CD8-positive, alpha-beta memory T cell (primary cell): ENCODE measurements at regions of chr3 and their contacts with region 1.

Region 1: DNA sequence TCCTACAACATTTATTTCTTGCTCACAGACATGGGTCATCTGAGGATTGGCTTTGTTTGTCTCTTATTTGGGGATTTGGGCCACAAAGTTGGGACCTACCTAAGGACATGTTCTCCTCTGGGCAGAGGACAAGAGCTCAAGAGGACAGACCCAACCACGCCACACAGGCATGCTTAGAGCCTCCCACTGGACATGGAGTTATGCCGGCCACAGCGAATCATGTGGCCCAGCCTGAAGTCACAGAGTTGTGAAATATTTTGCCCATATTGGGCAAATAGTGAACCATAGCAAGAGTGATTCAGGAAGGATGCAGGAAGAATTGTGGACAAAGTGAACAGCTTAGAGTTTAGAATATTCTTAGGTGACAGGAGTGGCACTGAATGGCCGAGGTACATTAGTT is 9.9 kb downstream of the TRAK1 start:
- DNase-seq: no peak
- H3K4me3 ChIP-seq: no peak overlapping the region
- H3K4me3 Mint-ChIP-seq: no peak overlapping the region
- H3K27ac ChIP-seq: no peak overlapping the region
- H3K27ac Mint-ChIP-seq: peak overlapping the region in 1 of 8 donors; percentile 3
- H3K4me1 ChIP-seq: no peaks in the 10 kb centered on the region
- H3K4me1 Mint-ChIP-seq: peaks cover 0 to 12% (median 0%) of the 10 kb centered on the region in 3 donors
- H3K27me3 ChIP-seq: no peaks in the 10 kb centered on the region
- H3K27me3 Mint-ChIP-seq: no peaks in the 10 kb centered on the region

Region 2: DNA sequence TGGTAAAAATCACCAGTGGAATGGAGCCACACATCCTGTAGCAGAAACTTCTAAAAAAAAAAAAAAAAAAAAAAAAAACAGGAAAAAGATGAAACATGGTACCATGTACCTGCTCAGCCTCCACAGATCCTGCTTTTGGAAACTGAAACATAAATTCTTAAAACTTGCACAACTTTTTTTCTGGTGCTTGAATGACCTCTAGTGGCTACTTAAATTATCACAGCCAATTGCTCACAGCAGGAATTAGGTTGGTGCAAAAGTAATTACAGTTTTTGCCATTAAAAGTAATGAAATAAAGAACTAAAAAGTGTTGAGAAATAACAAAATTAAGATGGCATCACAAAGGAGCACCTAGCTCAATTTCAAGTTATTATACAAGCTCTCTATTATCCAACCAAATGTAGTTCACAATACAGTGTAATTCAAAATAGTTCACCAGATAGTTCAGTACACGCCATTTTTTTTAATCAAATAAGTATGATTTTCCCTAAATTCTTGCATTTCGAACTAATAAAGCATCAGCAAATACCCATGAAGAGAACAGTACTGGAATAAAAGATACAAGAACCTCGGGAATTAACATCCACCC is 219.7 kb before region 1 on chr3:
- CTCF ChIA-PET with region 1: interaction called, 15 read pairs
- POLR2A ChIA-PET with region 1: no interaction called
- DNase-seq: peak in 2 of 5 donors; percentile 28 to 29
- H3K4me3 ChIP-seq: no peak overlapping the region
- H3K4me3 Mint-ChIP-seq: no peak overlapping the region
- H3K27ac ChIP-seq: no peak overlapping the region
- H3K27ac Mint-ChIP-seq: no peak overlapping the region
- H3K4me1 ChIP-seq: no peaks in the 10 kb centered on the region
- H3K4me1 Mint-ChIP-seq: no peaks in the 10 kb centered on the region
- H3K27me3 ChIP-seq: no peaks in the 10 kb centered on the region
- H3K27me3 Mint-ChIP-seq: no peaks in the 10 kb centered on the region

Region 3: GRCh38 chr3:41893977-41894376 is 207.1 kb before region 1 on chr3:
- CTCF ChIA-PET with region 1: interaction called, 18 read pairs
- POLR2A ChIA-PET with region 1: no interaction called
- DNase-seq: peak in 2 of 5 donors; percentile 17 to 18
- H3K4me3 ChIP-seq: no peak overlapping the region
- H3K4me3 Mint-ChIP-seq: no peak overlapping the region
- H3K27ac ChIP-seq: no peak overlapping the region
- H3K27ac Mint-ChIP-seq: peak overlapping the region in 1 of 8 donors; percentile 21
- H3K4me1 ChIP-seq: no peaks in the 10 kb centered on the region
- H3K4me1 Mint-ChIP-seq: no peaks in the 10 kb centered on the region
- H3K27me3 ChIP-seq: no peaks in the 10 kb centered on the region
- H3K27me3 Mint-ChIP-seq: no peaks in the 10 kb centered on the region

Region 4: GRCh38 chr3:41961750-41962679 is 139.0 kb before region 1 on chr3 and contains the start of gene ULK4:
- CTCF ChIA-PET with region 1: interaction called, 10 read pairs
- POLR2A ChIA-PET with region 1: no interaction called
- DNase-seq: peak; percentile 89 to 97 (median 96)
- H3K4me3 ChIP-seq: peak within 1 kb of the TSS; percentile 85
- H3K4me3 Mint-ChIP-seq: peak within 1 kb of the TSS; percentile 92 to 99 (median 96)
- H3K27ac ChIP-seq: peak within 1 kb of the TSS; percentile 89
- H3K27ac Mint-ChIP-seq: peak within 1 kb of the TSS; percentile 94 to 100 (median 98)
- H3K4me1 ChIP-seq: peaks cover 13% of the 10 kb centered on the region
- H3K4me1 Mint-ChIP-seq: peaks cover 15 to 27% (median 25%) of the 10 kb centered on the region in 3 donors
- H3K27me3 ChIP-seq: no peaks in the 10 kb centered on the region
- H3K27me3 Mint-ChIP-seq: no peaks in the 10 kb centered on the region
- total RNA-seq, gene ULK4: 12.3 to 12.7 TPM

Region 5: DNA sequence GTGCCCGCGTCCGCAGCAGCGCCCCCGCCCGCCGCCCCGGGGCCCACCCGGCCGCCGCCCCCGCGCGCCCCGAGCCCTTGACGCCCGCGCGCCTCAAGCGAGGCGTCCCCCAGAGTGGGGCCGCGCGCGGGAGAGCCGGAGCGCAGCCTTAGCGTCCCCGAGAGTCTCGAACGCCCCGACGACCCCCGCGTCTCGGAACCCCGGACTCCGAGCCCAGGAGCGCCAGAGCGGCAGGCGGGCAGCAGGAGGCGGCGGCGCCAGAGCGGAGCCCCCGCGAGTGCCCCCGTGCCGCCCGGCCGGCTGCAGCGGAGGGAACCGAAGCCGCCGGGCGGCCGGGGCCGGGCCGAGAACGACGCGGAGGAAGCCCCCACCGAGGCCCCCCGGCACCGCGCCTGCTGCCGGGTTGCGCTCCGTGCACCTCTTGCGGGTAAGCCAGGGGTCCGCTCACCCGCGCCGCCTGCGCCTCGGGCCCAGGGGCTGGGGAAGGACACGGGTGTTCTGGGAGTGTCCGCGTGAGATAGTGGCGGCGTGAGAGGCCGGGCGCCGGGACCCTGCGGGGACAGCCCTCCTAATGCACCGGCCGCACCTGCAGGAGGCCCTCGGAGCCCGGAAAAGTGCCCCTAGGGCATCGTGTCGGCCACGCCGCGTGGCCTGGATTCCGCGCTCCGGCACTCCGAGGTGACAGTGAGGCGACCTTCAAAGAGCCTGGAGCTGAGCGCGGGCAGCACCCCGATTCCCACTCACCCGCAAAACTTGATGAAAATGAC is 87.2 kb before region 1 on chr3:
- CTCF ChIA-PET with region 1: interaction called, 10 read pairs
- POLR2A ChIA-PET with region 1: no interaction called
- DNase-seq: peak; percentile 14 to 55 (median 25)
- H3K4me3 ChIP-seq: peak overlapping the region; percentile 67
- H3K4me3 Mint-ChIP-seq: peak overlapping the region; percentile 89 to 92 (median 91)
- H3K27ac ChIP-seq: peak overlapping the region; percentile 71
- H3K27ac Mint-ChIP-seq: peak overlapping the region; percentile 90 to 95 (median 93)
- H3K4me1 ChIP-seq: peaks cover 25% of the 10 kb centered on the region
- H3K4me1 Mint-ChIP-seq: peaks cover 32 to 51% (median 45%) of the 10 kb centered on the region in 3 donors
- H3K27me3 ChIP-seq: no peaks in the 10 kb centered on the region
- H3K27me3 Mint-ChIP-seq: no peaks in the 10 kb centered on the region

Region 6: GRCh38 chr3:42556089-42556632 is 455.1 kb after region 1 on chr3:
- CTCF ChIA-PET with region 1: no interaction called
- POLR2A ChIA-PET with region 1: no interaction called
- DNase-seq: peak; percentile 9 to 77 (median 62)
- H3K4me3 ChIP-seq: peak overlapping the region; percentile 8
- H3K4me3 Mint-ChIP-seq: peak overlapping the region; percentile 19 to 82 (median 69)
- H3K27ac ChIP-seq: peak overlapping the region; percentile 21
- H3K27ac Mint-ChIP-seq: peak overlapping the region; percentile 86 to 98 (median 95)
- H3K4me1 ChIP-seq: peaks cover 22% of the 10 kb centered on the region
- H3K4me1 Mint-ChIP-seq: peaks cover 34 to 50% (median 50%) of the 10 kb centered on the region in 3 donors
- H3K27me3 ChIP-seq: no peaks in the 10 kb centered on the region
- H3K27me3 Mint-ChIP-seq: no peaks in the 10 kb centered on the region